CD14-positive monocyte (primary cell): ENCODE measurements at regions of chr1 and their contacts with region 1.

Region 1: GRCh38 chr1:161209790-161210409 is 5.2 kb upstream of the FCER1G start:
- DNase-seq: peak; percentile 76 to 87 (median 87)
- H3K4me3 ChIP-seq: no peak overlapping the region
- H3K4me3 Mint-ChIP-seq: no peak overlapping the region
- H3K27ac ChIP-seq: peak overlapping the region in 1 of 2 donors; percentile 6
- H3K27ac Mint-ChIP-seq: peak overlapping the region; percentile 47 to 94 (median 85)
- H3K4me1 ChIP-seq: peaks cover 29 to 39% of the 10 kb centered on the region in 2 donors
- H3K4me1 Mint-ChIP-seq: peaks cover 39% of the 10 kb centered on the region
- H3K27me3 ChIP-seq: no peaks in the 10 kb centered on the region
- H3K27me3 Mint-ChIP-seq: no peaks in the 10 kb centered on the region
- CTCF ChIP-seq: peak; percentile 96

Region 2: DNA sequence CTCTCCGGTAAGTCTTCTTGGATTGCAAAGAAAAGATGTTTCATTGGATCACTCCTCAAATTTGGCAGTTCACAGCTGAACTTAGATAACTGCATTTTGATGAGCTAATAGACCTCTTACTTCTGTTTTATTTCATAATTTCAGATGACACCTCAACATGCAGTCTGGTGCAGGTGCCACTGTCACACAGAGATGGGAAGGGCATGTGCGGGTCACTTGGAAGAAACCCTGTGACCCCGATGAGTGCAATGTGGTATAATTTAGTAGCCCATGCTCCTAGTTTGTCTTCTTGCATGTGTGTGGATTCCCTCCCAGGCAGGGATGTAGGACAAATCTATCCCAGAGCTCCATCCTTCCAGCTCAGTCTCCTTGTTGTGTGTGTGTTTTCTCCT is 562.6 kb before region 1 on chr1:
- intact Hi-C with region 1: no loop called
- DNase-seq: no peak
- H3K4me3 ChIP-seq: peak overlapping the region; percentile 3 to 64 (median 13)
- H3K4me3 Mint-ChIP-seq: peak overlapping the region; percentile 63 to 82
- H3K27ac ChIP-seq: peak overlapping the region; percentile 44 to 84
- H3K27ac Mint-ChIP-seq: peak overlapping the region; percentile 5 to 87 (median 59)
- H3K4me1 ChIP-seq: peaks cover 17 to 24% of the 10 kb centered on the region in 2 donors
- H3K4me1 Mint-ChIP-seq: peaks cover 34% of the 10 kb centered on the region
- H3K27me3 ChIP-seq: no peaks in the 10 kb centered on the region
- H3K27me3 Mint-ChIP-seq: peaks cover 0 to 4% (median 1%) of the 10 kb centered on the region in 3 donors
- CTCF ChIP-seq: no peak

Region 3: GRCh38 chr1:161165742-161166668 is 43.9 kb before region 1 on chr1 and contains the start of gene PPOX:
- intact Hi-C with region 1: no loop called
- DNase-seq: peak; percentile 95 to 97 (median 96)
- H3K4me3 ChIP-seq: peak within 1 kb of the TSS; percentile 33 to 75 (median 73)
- H3K4me3 Mint-ChIP-seq: peak within 1 kb of the TSS; percentile 83 to 94
- H3K27ac ChIP-seq: peak within 1 kb of the TSS; percentile 91 to 98
- H3K27ac Mint-ChIP-seq: peak within 1 kb of the TSS; percentile 95 to 99 (median 97)
- H3K4me1 ChIP-seq: peaks cover 21 to 28% of the 10 kb centered on the region in 2 donors
- H3K4me1 Mint-ChIP-seq: peaks cover 38% of the 10 kb centered on the region
- H3K27me3 ChIP-seq: no peaks in the 10 kb centered on the region
- H3K27me3 Mint-ChIP-seq: peaks cover 0 to 2% (median 0%) of the 10 kb centered on the region in 3 donors
- CTCF ChIP-seq: peak; percentile 56
- polyA plus RNA-seq, gene PPOX: 10.5 to 42.6 (median 10.8) TPM

Region 4: GRCh38 chr1:161292631-161293030 is 82.7 kb after region 1 on chr1:
- intact Hi-C with region 1: loop called in 1 of 2 experiments (anchors 5 kb)
- DNase-seq: no peak
- H3K4me3 ChIP-seq: no peak overlapping the region
- H3K4me3 Mint-ChIP-seq: no peak overlapping the region
- H3K27ac ChIP-seq: no peak overlapping the region
- H3K27ac Mint-ChIP-seq: no peak overlapping the region
- H3K4me1 ChIP-seq: peaks cover 8 to 10% of the 10 kb centered on the region in 2 donors
- H3K4me1 Mint-ChIP-seq: peaks cover 8% of the 10 kb centered on the region
- H3K27me3 ChIP-seq: no peaks in the 10 kb centered on the region
- H3K27me3 Mint-ChIP-seq: peaks cover 0 to 4% (median 2%) of the 10 kb centered on the region in 3 donors
- CTCF ChIP-seq: no peak

Region 5: GRCh38 chr1:161382214-161383019 is 172.5 kb after region 1 on chr1:
- intact Hi-C with region 1: loop called in 1 of 2 experiments (anchors 5 kb)
- DNase-seq: peak; percentile 34 to 70 (median 58)
- H3K4me3 ChIP-seq: no peak overlapping the region
- H3K4me3 Mint-ChIP-seq: no peak overlapping the region
- H3K27ac ChIP-seq: no peak overlapping the region
- H3K27ac Mint-ChIP-seq: peak overlapping the region in 3 of 7 donors; percentile 11 to 79 (median 25)
- H3K4me1 ChIP-seq: peaks cover 5 to 6% of the 10 kb centered on the region in 2 donors
- H3K4me1 Mint-ChIP-seq: peaks cover 12% of the 10 kb centered on the region
- H3K27me3 ChIP-seq: no peaks in the 10 kb centered on the region
- H3K27me3 Mint-ChIP-seq: peaks cover 1 to 7% (median 2%) of the 10 kb centered on the region in 3 donors
- CTCF ChIP-seq: peak; percentile 82